ENCODE measurements at regions of chr6 and their contacts with region 1.

Region 1: GRCh38 chr6:154606457-154606856 is 96.0 kb upstream of the CNKSR3 start:
- DNase-seq: peak; percentile 93
- ATAC-seq: peak; percentile 82
- H3K4me3 ChIP-seq: no peak overlapping the region; the same call in 1 of the 2 replicates
- H3K27ac ChIP-seq: peak overlapping the region; percentile 73
- H3K4me1 ChIP-seq: peaks cover 31% of the 10 kb centered on the region
- H3K27me3 ChIP-seq: no peaks in the 10 kb centered on the region
- CTCF ChIP-seq: 0 out of 6 replicates have a peak, but pooled peaks of 1 of the 3 experiments have one; percentile 7
- EP300 ChIP-seq: peak; percentile 90 to 98; a peak in 3 of 4 replicates
- POLR2A ChIP-seq: peak; percentile 64
- RAD21 ChIP-seq: no peak; the same call in 1 of the 2 replicates

Region 2: GRCh38 chr6:154301839-154302752 is 304.4 kb before region 1 on chr6:
- CTCF ChIA-PET with region 1: no interaction called
- POLR2A ChIA-PET with region 1: no interaction called
- RAD21 ChIA-PET with region 1: no interaction called
- SMC1A ChIA-PET with region 1: no interaction called
- in situ Hi-C with region 1: no loop called
- intact Hi-C with region 1: loop called (anchors 5 kb)
- DNase-seq: peak; percentile 90
- ATAC-seq: peak; percentile 95
- H3K4me3 ChIP-seq: no peak overlapping the region
- H3K27ac ChIP-seq: peak overlapping the region; percentile 36; the same call in 1 of the 2 replicates
- H3K4me1 ChIP-seq: peaks cover 23% of the 10 kb centered on the region
- H3K27me3 ChIP-seq: no peaks in the 10 kb centered on the region
- CTCF ChIP-seq: no peak
- EP300 ChIP-seq: peak; percentile 87 to 96
- POLR2A ChIP-seq: no peak
- RAD21 ChIP-seq: no peak

Region 3: DNA sequence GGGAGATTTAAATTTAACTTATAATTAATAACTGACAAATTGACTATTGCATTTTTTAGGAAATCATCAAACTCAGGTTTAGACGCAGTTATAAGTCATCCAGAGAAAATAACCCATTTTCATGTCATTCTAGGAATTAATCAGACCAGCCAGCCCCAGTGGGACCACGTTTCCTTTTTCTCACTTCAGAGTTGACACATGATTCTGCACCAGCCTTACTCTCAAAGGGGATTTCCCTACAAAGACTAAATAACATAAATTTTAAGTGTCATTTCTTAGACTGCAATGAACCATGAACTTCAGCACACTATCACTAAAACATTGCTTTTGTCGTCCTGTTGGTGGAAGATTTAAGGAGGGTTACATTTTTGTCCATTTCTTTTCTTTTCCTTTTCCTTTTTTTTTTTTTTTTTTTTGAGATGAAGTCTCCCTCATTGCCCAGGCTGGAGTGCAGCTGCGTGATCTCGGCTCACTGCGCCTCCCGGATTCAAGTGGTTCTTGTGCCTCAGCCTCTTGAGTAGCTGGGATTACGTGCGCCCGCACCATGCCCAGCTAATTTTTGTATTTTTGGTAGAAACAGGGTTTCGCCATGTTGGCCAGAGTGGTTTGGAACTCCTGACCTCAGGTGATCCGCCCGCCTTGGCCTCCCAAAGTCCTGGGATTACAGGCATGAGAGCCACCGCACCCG is 253.4 kb before region 1 on chr6:
- CTCF ChIA-PET with region 1: no interaction called
- POLR2A ChIA-PET with region 1: no interaction called
- RAD21 ChIA-PET with region 1: interaction called, 3 read pairs
- SMC1A ChIA-PET with region 1: no interaction called
- in situ Hi-C with region 1: no loop called
- intact Hi-C with region 1: loop called (anchors 5 kb)
- DNase-seq: peak; percentile 84
- ATAC-seq: peak; percentile 77
- H3K4me3 ChIP-seq: no peak overlapping the region; the same call in 1 of the 2 replicates
- H3K27ac ChIP-seq: no peak overlapping the region
- H3K4me1 ChIP-seq: peaks cover 33% of the 10 kb centered on the region
- H3K27me3 ChIP-seq: no peaks in the 10 kb centered on the region
- CTCF ChIP-seq: no peak
- EP300 ChIP-seq: peak; percentile 87 to 92
- POLR2A ChIP-seq: no peak
- RAD21 ChIP-seq: 0 out of 2 replicates have a peak, but pooled peaks have one; percentile 4

Region 4: GRCh38 chr6:154733012-154733625 is 126.7 kb after region 1 on chr6 and contains the start of gene SCAF8:
- CTCF ChIA-PET with region 1: no interaction called
- POLR2A ChIA-PET with region 1: no interaction called
- RAD21 ChIA-PET with region 1: no interaction called
- SMC1A ChIA-PET with region 1: no interaction called
- in situ Hi-C with region 1: no loop called
- intact Hi-C with region 1: loop called (anchors 5 kb)
- DNase-seq: peak; percentile 23
- ATAC-seq: peak; percentile 87
- H3K4me3 ChIP-seq: peak within 1 kb of the TSS; percentile 88
- H3K27ac ChIP-seq: peak within 1 kb of the TSS; percentile 96
- H3K4me1 ChIP-seq: peaks cover 5% of the 10 kb centered on the region; the same call in 1 of the 2 replicates
- H3K27me3 ChIP-seq: no peaks in the 10 kb centered on the region
- CTCF ChIP-seq: peak; percentile 73 to 91 (median 73); a peak in 5 of 6 replicates
- EP300 ChIP-seq: peak in 1 of 2 experiments; percentile 45; a peak in 1 of 4 replicates
- POLR2A ChIP-seq: peak; percentile 93
- RAD21 ChIP-seq: peak; percentile 50
- polyA plus RNA-seq, gene SCAF8: 8.1 to 8.5 TPM